HEK293T (cell line): ENCODE measurements at regions of chr6 and their contacts with region 1.

Region 1: DNA sequence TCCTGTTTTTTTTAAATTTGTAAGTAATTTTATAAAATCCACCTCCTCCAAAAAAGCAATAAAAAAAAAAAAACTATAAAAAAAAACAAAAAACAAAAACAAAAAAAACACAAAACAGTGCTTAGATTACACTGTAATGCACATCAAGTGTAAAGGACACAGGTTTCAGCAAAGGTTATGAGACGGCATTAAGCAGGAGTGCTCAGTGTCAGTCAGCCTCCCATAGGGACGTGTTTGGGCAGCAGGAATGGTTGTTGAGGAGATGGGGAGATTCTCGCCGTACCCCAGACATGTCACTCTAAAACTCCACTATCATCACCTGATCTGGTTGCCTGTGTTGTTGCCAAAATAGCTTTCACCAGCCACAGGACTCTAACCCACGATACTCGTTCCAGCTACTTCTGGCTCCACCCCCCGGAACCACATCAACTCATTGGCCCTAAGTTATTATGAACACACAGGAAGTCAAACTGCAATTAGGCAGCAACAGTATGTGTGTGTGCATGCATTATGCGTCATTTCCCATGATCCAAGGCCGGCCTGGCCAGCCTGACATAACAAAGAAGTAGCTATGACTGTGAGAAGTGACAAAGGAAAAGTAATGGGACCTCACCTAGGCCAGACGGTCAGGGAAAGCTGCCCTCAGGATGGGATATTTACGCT is 28.7 kb downstream of the ECT2L start:
- DNase-seq: no peak

Region 2: GRCh38 chr6:138289739-138290138 is 534.9 kb before region 1 on chr6:
- CTCF ChIA-PET with region 1: no interaction called
- POLR2A ChIA-PET with region 1: no interaction called
- DNase-seq: peak; percentile 53

Region 3: GRCh38 chr6:139066080-139066479 is 241.5 kb after region 1 on chr6:
- CTCF ChIA-PET with region 1: interaction called, 10 read pairs
- POLR2A ChIA-PET with region 1: no interaction called
- DNase-seq: no peak